ENCODE measurements at regions of chr13 and their contacts with region 1.

Region 1: DNA sequence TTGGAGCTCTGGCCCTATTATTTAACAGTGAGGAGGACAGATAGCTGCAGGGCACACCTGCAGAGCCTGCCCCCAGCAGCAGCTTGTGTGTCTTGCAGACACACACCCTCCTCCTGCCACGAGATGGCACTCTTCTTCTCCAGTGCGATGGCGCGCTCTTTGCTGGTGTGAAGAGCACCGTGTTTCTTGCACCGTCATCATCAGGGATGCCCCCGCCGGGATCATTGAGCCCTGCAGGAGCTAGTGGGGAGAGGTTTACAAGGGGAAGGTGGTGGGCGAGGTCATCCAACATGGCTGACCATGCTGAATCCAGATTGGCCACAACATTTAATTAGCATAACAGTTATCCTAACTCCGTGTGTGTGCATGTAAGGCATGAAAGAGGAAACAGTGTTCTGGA is 105.6 kb downstream of the RAB20 start:
- DNase-seq: peak; percentile 84
- ATAC-seq: peak; percentile 93
- H3K4me3 Mint-ChIP-seq: no peak overlapping the region
- H3K27ac Mint-ChIP-seq: peak overlapping the region; percentile 19; the same call in 1 of the 2 replicates
- H3K4me1 Mint-ChIP-seq: peaks cover 28% of the 10 kb centered on the region
- H3K27me3 Mint-ChIP-seq: no peaks in the 10 kb centered on the region
- CTCF ChIP-seq: peak; percentile 47; the same call in 1 of the 2 replicates

Region 2: GRCh38 chr13:110265682-110266430 is 190.1 kb before region 1 on chr13:
- CTCF ChIA-PET with region 1: interaction called, 10 read pairs
- POLR2A ChIA-PET with region 1: no interaction called
- DNase-seq: no peak
- ATAC-seq: no peak
- H3K4me3 Mint-ChIP-seq: no peak overlapping the region
- H3K27ac Mint-ChIP-seq: 0 out of 2 replicates have a peak overlapping the region, but pooled peaks have one; percentile 19
- H3K4me1 Mint-ChIP-seq: peaks cover 58% of the 10 kb centered on the region
- H3K27me3 Mint-ChIP-seq: no peaks in the 10 kb centered on the region
- CTCF ChIP-seq: no peak

Region 3: DNA sequence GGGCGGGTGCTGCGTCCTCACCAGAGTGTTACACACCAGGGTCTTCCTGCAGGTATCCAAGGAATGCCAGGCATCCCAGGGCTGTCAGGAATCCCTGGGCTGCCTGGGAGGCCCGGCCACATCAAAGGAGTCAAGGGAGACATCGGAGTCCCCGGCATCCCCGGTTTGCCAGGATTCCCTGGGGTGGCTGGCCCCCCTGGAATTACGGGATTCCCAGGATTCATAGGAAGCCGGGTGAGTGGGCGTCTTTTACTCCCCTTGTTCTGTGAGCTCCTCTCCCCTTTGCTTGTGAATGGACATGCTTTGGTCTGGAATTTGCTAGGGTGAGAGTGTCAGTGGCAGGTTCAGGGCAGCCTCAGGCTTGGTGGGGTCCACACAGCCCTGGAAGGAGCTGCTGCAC is 29.7 kb after region 1 on chr13:
- CTCF ChIA-PET with region 1: interaction called, 16 read pairs
- POLR2A ChIA-PET with region 1: no interaction called
- DNase-seq: peak; percentile 86
- ATAC-seq: peak; percentile 89
- H3K4me3 Mint-ChIP-seq: no peak overlapping the region
- H3K27ac Mint-ChIP-seq: peak overlapping the region; percentile 99
- H3K4me1 Mint-ChIP-seq: peaks cover 34% of the 10 kb centered on the region
- H3K27me3 Mint-ChIP-seq: no peaks in the 10 kb centered on the region
- CTCF ChIP-seq: no peak

Region 4: GRCh38 chr13:110517505-110518225 is 61.7 kb after region 1 on chr13:
- CTCF ChIA-PET with region 1: interaction called, 11 read pairs
- POLR2A ChIA-PET with region 1: no interaction called
- DNase-seq: no peak
- ATAC-seq: no peak
- H3K4me3 Mint-ChIP-seq: no peak overlapping the region
- H3K27ac Mint-ChIP-seq: 0 out of 2 replicates have a peak overlapping the region, but pooled peaks have one; percentile 74
- H3K4me1 Mint-ChIP-seq: peaks cover 8% of the 10 kb centered on the region; the same call in 1 of the 2 replicates
- H3K27me3 Mint-ChIP-seq: no peaks in the 10 kb centered on the region
- CTCF ChIP-seq: no peak

Region 5: GRCh38 chr13:110561344-110562035 is 105.5 kb after region 1 on chr13 and contains the start of gene RAB20:
- CTCF ChIA-PET with region 1: interaction called, 11 read pairs
- POLR2A ChIA-PET with region 1: no interaction called
- DNase-seq: peak; percentile 79
- ATAC-seq: peak; percentile 65
- H3K4me3 Mint-ChIP-seq: peak within 1 kb of the TSS; percentile 92
- H3K27ac Mint-ChIP-seq: peak within 1 kb of the TSS; percentile 87; the same call in 1 of the 2 replicates
- H3K4me1 Mint-ChIP-seq: peaks cover 55% of the 10 kb centered on the region
- H3K27me3 Mint-ChIP-seq: peaks cover 15% of the 10 kb centered on the region
- CTCF ChIP-seq: no peak
- total RNA-seq, gene RAB20: 14.3 to 19.0 TPM (median 18.6 TPM) in 3 replicates